Naive thymus-derived CD4-positive, alpha-beta T cell (primary cell): ENCODE measurements at regions of chr11 and their contacts with region 1.

Region 1: GRCh38 chr11:62705880-62706849 is 1.1 kb downstream of the BSCL2 start:
- DNase-seq: peak; percentile 86 to 96 (median 90)
- ATAC-seq: peak; percentile 79
- H3K4me3 ChIP-seq: peak overlapping the region; percentile 74
- H3K4me3 Mint-ChIP-seq: peak overlapping the region; percentile 83 to 97 (median 90)
- H3K27ac ChIP-seq: peak overlapping the region; percentile 73
- H3K27ac Mint-ChIP-seq: peak overlapping the region; percentile 69 to 92 (median 87)
- H3K4me1 ChIP-seq: peaks cover 41 to 46% of the 10 kb centered on the region in 2 donors
- H3K4me1 Mint-ChIP-seq: peaks cover 17 to 49% (median 44%) of the 10 kb centered on the region in 7 donors
- H3K27me3 ChIP-seq: no peaks in the 10 kb centered on the region
- H3K27me3 Mint-ChIP-seq: no peaks in the 10 kb centered on the region

Region 2: GRCh38 chr11:62054484-62055121 is 651.6 kb before region 1 on chr11:
- CTCF ChIA-PET with region 1: no interaction called
- POLR2A ChIA-PET with region 1: no interaction called
- intact Hi-C with region 1: no loop called
- DNase-seq: peak in 7 of 9 donors; percentile 5 to 47 (median 21)
- ATAC-seq: no peak
- H3K4me3 ChIP-seq: no peak overlapping the region
- H3K4me3 Mint-ChIP-seq: no peak overlapping the region
- H3K27ac ChIP-seq: no peak overlapping the region
- H3K27ac Mint-ChIP-seq: no peak overlapping the region
- H3K4me1 ChIP-seq: no peaks in the 10 kb centered on the region
- H3K4me1 Mint-ChIP-seq: no peaks in the 10 kb centered on the region
- H3K27me3 ChIP-seq: no peaks in the 10 kb centered on the region
- H3K27me3 Mint-ChIP-seq: peaks cover 0 to 24% (median 0%) of the 10 kb centered on the region in 5 donors

Region 3: DNA sequence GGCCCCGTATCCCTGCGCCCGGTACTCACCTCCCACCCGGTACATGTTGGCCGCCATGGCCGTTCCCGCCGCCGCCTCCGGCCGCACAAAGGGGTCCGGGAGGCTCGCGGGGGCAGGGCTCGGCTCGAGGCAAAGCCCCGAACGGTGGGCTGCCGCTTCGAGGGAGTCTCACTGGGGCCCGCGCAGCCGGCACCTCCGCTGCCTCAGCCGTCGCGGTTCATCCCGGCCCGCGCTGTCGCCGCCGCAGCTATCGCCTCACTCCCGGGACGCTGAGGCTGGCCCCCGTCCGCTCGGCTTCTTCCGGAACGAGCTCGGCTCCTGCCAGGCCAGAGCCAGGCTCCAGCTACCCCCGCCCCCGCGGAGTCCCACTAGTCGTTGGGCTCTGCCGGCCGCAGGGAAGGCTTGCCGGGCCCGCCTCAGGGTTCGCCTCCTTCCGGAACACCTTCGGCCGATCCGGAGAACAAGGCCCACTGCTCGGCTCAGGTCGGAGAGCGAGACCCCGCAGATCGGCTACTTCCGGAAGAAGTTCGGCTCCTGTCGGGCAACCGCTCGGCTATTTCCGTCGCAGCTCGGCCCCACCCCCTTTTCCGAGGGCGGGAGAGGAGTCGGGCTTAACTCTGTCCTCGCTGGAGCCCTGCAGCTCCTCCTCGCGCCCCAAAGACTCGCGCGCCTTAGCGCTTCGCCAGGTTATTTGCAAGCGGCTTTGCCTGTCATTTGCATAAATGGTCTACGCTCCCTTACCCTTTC is 104.6 kb before region 1 on chr11 and contains the start of gene MTA2:
- CTCF ChIA-PET with region 1: no interaction called
- POLR2A ChIA-PET with region 1: interaction called, 9 read pairs
- intact Hi-C with region 1: loop called in 1 of 2 experiments (anchors 1 kb)
- DNase-seq: peak; percentile 98 to 100 (median 100)
- ATAC-seq: peak; percentile 85
- H3K4me3 ChIP-seq: peak within 1 kb of the TSS; percentile 71
- H3K4me3 Mint-ChIP-seq: peak within 1 kb of the TSS; percentile 85 to 99 (median 94)
- H3K27ac ChIP-seq: peak within 1 kb of the TSS; percentile 98
- H3K27ac Mint-ChIP-seq: peak within 1 kb of the TSS; percentile 90 to 98 (median 97)
- H3K4me1 ChIP-seq: peaks cover 16 to 23% of the 10 kb centered on the region in 2 donors
- H3K4me1 Mint-ChIP-seq: peaks cover 43 to 64% (median 54%) of the 10 kb centered on the region in 7 donors
- H3K27me3 ChIP-seq: no peaks in the 10 kb centered on the region
- H3K27me3 Mint-ChIP-seq: no peaks in the 10 kb centered on the region
- total RNA-seq, gene MTA2: 134 to 238 (median 199) TPM

Region 4: GRCh38 chr11:62652161-62653006 is 53.8 kb before region 1 on chr11:
- CTCF ChIA-PET with region 1: interaction called, 3 read pairs
- POLR2A ChIA-PET with region 1: interaction called, 23 read pairs
- intact Hi-C with region 1: loop called (anchors 1 kb)
- DNase-seq: peak in 4 of 9 donors; percentile 13 to 59 (median 22)
- ATAC-seq: no peak
- H3K4me3 ChIP-seq: peak overlapping the region; percentile 87
- H3K4me3 Mint-ChIP-seq: peak overlapping the region; percentile 75 to 94 (median 90)
- H3K27ac ChIP-seq: peak overlapping the region; percentile 95
- H3K27ac Mint-ChIP-seq: peak overlapping the region; percentile 88 to 98 (median 96)
- H3K4me1 ChIP-seq: peaks cover 13 to 16% of the 10 kb centered on the region in 2 donors
- H3K4me1 Mint-ChIP-seq: peaks cover 11 to 36% (median 22%) of the 10 kb centered on the region in 7 donors
- H3K27me3 ChIP-seq: no peaks in the 10 kb centered on the region
- H3K27me3 Mint-ChIP-seq: no peaks in the 10 kb centered on the region

Region 5: GRCh38 chr11:62678770-62679696 is 27.1 kb before region 1 on chr11 and contains the start of gene UBXN1:
- CTCF ChIA-PET with region 1: interaction called, 4 read pairs
- POLR2A ChIA-PET with region 1: interaction called, 46 read pairs
- intact Hi-C with region 1: loop called in 1 of 2 experiments (anchors 1 kb)
- DNase-seq: peak; percentile 63 to 84 (median 81)
- ATAC-seq: peak; percentile 91
- H3K4me3 ChIP-seq: peak within 1 kb of the TSS; percentile 87
- H3K4me3 Mint-ChIP-seq: peak within 1 kb of the TSS; percentile 86 to 93 (median 90)
- H3K27ac ChIP-seq: peak within 1 kb of the TSS; percentile 98
- H3K27ac Mint-ChIP-seq: peak within 1 kb of the TSS; percentile 88 to 98 (median 94)
- H3K4me1 ChIP-seq: peaks cover 13 to 15% of the 10 kb centered on the region in 2 donors
- H3K4me1 Mint-ChIP-seq: peaks cover 19 to 41% (median 37%) of the 10 kb centered on the region in 7 donors
- H3K27me3 ChIP-seq: no peaks in the 10 kb centered on the region
- H3K27me3 Mint-ChIP-seq: no peaks in the 10 kb centered on the region
- total RNA-seq, gene UBXN1: 114 to 215 (median 207) TPM

Region 6: GRCh38 chr11:62771144-62772021 is 65.2 kb after region 1 on chr11 and contains the start of gene TAF6L:
- CTCF ChIA-PET with region 1: no interaction called
- POLR2A ChIA-PET with region 1: interaction called, 10 read pairs
- intact Hi-C with region 1: loop called (anchors 1 kb)
- DNase-seq: peak; percentile 80 to 98 (median 82)
- ATAC-seq: peak; percentile 92
- H3K4me3 ChIP-seq: peak within 1 kb of the TSS; percentile 66
- H3K4me3 Mint-ChIP-seq: peak within 1 kb of the TSS; percentile 88 to 98 (median 94)
- H3K27ac ChIP-seq: peak within 1 kb of the TSS; percentile 82
- H3K27ac Mint-ChIP-seq: peak within 1 kb of the TSS; percentile 89 to 97 (median 94)
- H3K4me1 ChIP-seq: peaks cover 10 to 13% of the 10 kb centered on the region in 2 donors
- H3K4me1 Mint-ChIP-seq: peaks cover 17 to 37% (median 27%) of the 10 kb centered on the region in 7 donors
- H3K27me3 ChIP-seq: no peaks in the 10 kb centered on the region
- H3K27me3 Mint-ChIP-seq: no peaks in the 10 kb centered on the region
- total RNA-seq, gene TAF6L: 13.1 to 34.9 (median 24.1) TPM

Region 7: DNA sequence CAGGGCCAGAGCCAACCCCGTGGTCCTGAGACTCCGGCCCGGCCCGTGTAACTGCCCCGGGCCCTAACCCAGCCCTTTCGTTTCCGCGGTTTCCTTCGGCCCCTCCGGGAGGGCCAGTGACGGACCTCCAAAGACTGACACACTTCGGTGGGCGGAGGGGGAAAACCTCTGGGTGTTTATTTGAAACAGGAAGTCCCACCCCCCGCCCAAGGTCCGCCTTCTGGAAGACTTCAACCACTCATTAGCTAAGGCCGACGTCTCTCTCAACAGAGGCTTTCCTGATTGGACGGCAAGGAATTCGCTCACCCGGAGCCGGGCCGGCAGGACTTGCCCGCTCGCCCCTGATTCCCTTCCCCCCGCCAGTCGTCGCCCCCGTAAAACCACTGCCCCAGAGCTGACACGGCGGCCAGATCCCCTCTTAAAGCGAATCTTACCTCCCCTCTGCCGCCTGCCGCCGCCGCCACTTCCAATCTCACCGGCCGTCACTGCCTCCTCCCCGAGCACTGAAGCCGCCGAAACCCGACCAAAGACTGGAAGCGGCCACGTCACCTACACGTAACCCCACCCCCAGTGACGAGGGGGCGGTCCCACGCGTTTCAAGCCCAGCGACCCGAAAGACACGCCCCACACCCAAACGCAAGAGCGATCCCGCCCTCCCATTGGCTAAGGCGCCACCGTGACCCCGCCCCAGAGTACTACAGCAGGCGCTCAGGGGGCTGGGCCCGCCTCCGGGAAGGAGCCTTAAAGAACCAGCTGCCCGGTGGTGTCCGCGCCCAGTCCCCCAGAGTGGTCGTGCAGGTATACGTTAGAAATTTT is 125.6 kb after region 1 on chr11 and contains the start of gene STX5:
- CTCF ChIA-PET with region 1: no interaction called
- POLR2A ChIA-PET with region 1: interaction called, 6 read pairs
- intact Hi-C with region 1: loop called in 1 of 2 experiments (anchors 1 kb)
- DNase-seq: peak; percentile 96 to 100 (median 99)
- ATAC-seq: peak; percentile 98
- H3K4me3 ChIP-seq: peak within 1 kb of the TSS; percentile 95
- H3K4me3 Mint-ChIP-seq: peak within 1 kb of the TSS; percentile 87 to 99 (median 96)
- H3K27ac ChIP-seq: peak within 1 kb of the TSS; percentile 99
- H3K27ac Mint-ChIP-seq: peak within 1 kb of the TSS; percentile 93 to 100 (median 99)
- H3K4me1 ChIP-seq: peaks cover 16% of the 10 kb centered on the region in 2 donors
- H3K4me1 Mint-ChIP-seq: peaks cover 15 to 57% (median 45%) of the 10 kb centered on the region in 7 donors
- H3K27me3 ChIP-seq: no peaks in the 10 kb centered on the region
- H3K27me3 Mint-ChIP-seq: no peaks in the 10 kb centered on the region
- total RNA-seq, gene STX5: 47.0 to 152 (median 57.3) TPM

Region 8: DNA sequence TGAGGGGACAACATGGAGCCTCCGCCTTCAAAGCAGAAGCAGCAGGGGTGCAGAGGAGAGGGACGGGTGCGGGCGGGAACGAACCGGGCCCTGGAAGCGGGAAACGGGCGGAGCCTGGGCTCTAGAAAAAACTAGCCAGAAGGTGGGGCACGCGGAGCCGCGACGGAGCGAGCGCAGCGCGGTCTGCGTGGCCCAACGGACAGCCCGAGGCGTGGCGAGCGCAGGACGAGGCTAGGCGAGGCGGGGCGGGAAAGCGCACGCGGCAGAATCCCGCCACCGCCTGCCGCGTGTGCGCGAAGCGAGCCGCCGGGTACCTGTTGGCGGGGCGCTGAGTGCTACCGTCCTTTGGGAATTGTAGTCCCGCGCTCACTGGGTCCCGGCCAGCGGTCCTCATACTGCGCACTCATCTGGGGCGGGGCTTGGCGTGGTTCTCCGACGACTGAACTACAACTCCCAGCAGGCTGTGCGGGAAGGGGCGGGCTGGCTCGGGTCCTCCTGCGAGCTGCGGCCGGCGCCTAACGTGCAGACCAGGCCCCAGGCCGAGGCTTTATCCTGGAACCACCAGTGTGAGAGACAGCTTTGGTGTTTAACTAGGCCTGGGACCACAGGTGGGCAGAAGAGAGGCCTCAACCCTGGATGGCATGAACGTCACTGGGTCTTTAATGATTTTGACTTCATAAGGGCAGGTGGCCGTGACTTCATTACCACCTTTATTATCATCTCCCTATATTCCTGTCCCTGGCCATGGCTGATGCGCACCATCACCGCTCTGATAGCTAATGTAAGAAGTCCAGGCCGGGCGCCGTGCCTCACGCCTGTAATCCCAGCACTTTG is 965.4 kb after region 1 on chr11 and contains the start of gene ATL3:
- CTCF ChIA-PET with region 1: no interaction called
- POLR2A ChIA-PET with region 1: no interaction called
- intact Hi-C with region 1: loop called in 1 of 2 experiments (anchors 5 kb)
- DNase-seq: peak; percentile 82 to 92 (median 91)
- ATAC-seq: peak; percentile 98
- H3K4me3 ChIP-seq: peak within 1 kb of the TSS; percentile 97
- H3K4me3 Mint-ChIP-seq: peak within 1 kb of the TSS; percentile 76 to 90 (median 88)
- H3K27ac ChIP-seq: peak within 1 kb of the TSS; percentile 74
- H3K27ac Mint-ChIP-seq: peak within 1 kb of the TSS; percentile 68 to 91 (median 86)
- H3K4me1 ChIP-seq: peaks cover 4 to 6% of the 10 kb centered on the region in 2 donors
- H3K4me1 Mint-ChIP-seq: peaks cover 22 to 48% (median 27%) of the 10 kb centered on the region in 7 donors
- H3K27me3 ChIP-seq: no peaks in the 10 kb centered on the region
- H3K27me3 Mint-ChIP-seq: no peaks in the 10 kb centered on the region
- total RNA-seq, gene ATL3: 25.3 to 33.3 (median 29.5) TPM